Activated T-helper 2 cell treated with anti-CD3 and anti-CD28 coated beads, Interferon-gamma antibody, Interleukin-2, Interleukin-4, amounts not matched to agents 10 μg/mL and 5 μg/mL and 100 μg/mL, durations not matched to agents 14 hours and 24 hours and 36 hours (primary cell): ENCODE measurements at regions of chr14 and their contacts with region 1.

Region 1: DNA sequence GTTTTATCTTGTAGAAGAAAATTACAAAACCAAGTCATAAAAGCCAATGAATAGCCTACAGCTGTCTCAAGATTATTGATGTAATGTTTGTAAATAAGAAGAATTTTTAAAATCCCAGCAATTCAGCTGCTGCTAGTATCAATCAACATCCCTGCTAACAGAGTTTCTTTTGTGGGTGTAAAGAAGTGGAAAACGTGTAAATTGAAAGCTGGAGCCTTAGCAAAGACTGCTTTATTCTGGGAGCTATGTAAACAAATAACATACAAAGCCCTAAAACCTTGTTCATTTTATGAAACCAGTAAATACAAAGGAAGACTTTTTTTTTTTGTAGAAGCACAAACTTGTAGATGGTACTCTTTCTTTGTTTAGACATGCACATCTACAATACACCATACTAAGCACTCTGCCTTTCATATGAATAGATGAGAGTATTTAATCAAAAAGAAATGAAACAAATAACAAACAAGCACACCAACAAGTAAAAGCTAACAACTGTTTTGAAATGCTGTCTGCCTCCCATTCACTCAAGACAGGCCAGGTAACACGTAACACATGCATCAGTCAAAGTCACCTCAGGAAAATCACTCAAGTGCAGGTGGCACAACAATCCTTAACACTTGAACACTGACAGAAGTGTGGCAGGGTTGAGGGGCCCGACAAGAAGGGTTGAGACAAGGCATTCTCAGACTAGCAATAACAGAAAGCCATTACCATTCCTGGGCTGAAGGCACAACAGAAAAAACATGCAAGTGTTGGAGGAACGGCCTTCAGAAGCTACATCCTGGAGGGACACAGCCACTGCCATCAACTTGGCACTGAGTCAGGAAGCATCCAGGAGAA is 1364.0 kb upstream of the SEL1L start:
- DNase-seq: no peak
- H3K4me3 Mint-ChIP-seq: no peak overlapping the region
- H3K27ac Mint-ChIP-seq: no peak overlapping the region
- H3K4me1 Mint-ChIP-seq: no peaks in the 10 kb centered on the region
- H3K27me3 Mint-ChIP-seq: no peaks in the 10 kb centered on the region

Region 2: GRCh38 chr14:83867566-83868225 is 970.0 kb after region 1 on chr14:
- intact Hi-C with region 1: loop called (anchors 5 kb)
- DNase-seq: no peak
- H3K4me3 Mint-ChIP-seq: no peak overlapping the region
- H3K27ac Mint-ChIP-seq: no peak overlapping the region
- H3K4me1 Mint-ChIP-seq: no peaks in the 10 kb centered on the region
- H3K27me3 Mint-ChIP-seq: no peaks in the 10 kb centered on the region